ENCODE measurements at regions of chr11 and their contacts with region 1.

Region 1: GRCh38 chr11:86456052-86456939 is 81.6 kb downstream of the CCDC81 start:
- DNase-seq: peak; percentile 92
- ATAC-seq: peak; percentile 93
- H3K4me3 Mint-ChIP-seq: no peak overlapping the region
- H3K27ac Mint-ChIP-seq: no peak overlapping the region
- H3K4me1 Mint-ChIP-seq: peaks cover 18% of the 10 kb centered on the region
- H3K27me3 Mint-ChIP-seq: no peaks in the 10 kb centered on the region
- CTCF ChIP-seq: peak; percentile 94

Region 2: DNA sequence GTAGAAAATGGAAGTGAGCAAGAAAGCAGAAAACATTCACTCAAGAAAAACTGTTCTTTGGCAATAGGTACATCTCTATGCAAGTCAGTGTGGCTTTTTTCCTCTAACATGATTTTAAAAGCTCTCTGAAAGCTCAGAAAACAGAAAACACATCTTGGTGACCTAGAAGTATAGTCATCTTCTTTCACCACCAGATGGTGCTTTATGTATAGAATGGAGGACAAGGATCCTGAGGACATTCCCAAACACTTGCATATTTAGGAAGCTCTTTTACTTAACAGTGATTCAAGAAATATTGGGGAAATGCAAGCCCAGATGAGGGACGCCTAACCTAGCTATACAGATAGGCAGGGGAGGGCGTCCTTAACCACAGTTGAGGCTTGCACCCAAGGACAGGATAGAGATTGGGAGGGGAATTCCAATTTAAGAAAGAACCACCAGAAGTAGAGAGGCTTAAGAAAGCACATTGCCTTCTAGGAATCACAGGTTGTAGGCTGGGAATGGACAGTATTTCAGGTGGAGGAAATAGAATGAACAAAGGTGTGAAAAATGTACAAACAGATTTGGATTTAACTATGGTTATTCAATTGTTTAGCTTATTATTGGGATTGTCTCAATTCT is 95.4 kb before region 1 on chr11:
- CTCF ChIA-PET with region 1: no interaction called
- POLR2A ChIA-PET with region 1: no interaction called
- intact Hi-C with region 1: no loop called
- DNase-seq: no peak
- ATAC-seq: no peak
- H3K4me3 Mint-ChIP-seq: no peak overlapping the region
- H3K27ac Mint-ChIP-seq: no peak overlapping the region
- H3K4me1 Mint-ChIP-seq: no peaks in the 10 kb centered on the region
- H3K27me3 Mint-ChIP-seq: peaks cover 2% of the 10 kb centered on the region
- CTCF ChIP-seq: no peak

Region 3: GRCh38 chr11:86497181-86497701 is 40.9 kb after region 1 on chr11:
- CTCF ChIA-PET with region 1: no interaction called
- POLR2A ChIA-PET with region 1: no interaction called
- intact Hi-C with region 1: no loop called
- DNase-seq: no peak
- ATAC-seq: no peak
- H3K4me3 Mint-ChIP-seq: no peak overlapping the region
- H3K27ac Mint-ChIP-seq: no peak overlapping the region
- H3K4me1 Mint-ChIP-seq: peaks cover 2% of the 10 kb centered on the region
- H3K27me3 Mint-ChIP-seq: peaks cover 3% of the 10 kb centered on the region
- CTCF ChIP-seq: no peak

Region 4: GRCh38 chr11:86515297-86516094 is 59.2 kb after region 1 on chr11:
- CTCF ChIA-PET with region 1: no interaction called
- POLR2A ChIA-PET with region 1: no interaction called
- intact Hi-C with region 1: no loop called
- DNase-seq: no peak
- ATAC-seq: no peak
- H3K4me3 Mint-ChIP-seq: no peak overlapping the region
- H3K27ac Mint-ChIP-seq: no peak overlapping the region
- H3K4me1 Mint-ChIP-seq: no peaks in the 10 kb centered on the region
- H3K27me3 Mint-ChIP-seq: peaks cover 2% of the 10 kb centered on the region
- CTCF ChIP-seq: no peak

Region 5: GRCh38 chr11:86537541-86538222 is 81.4 kb after region 1 on chr11:
- CTCF ChIA-PET with region 1: no interaction called
- POLR2A ChIA-PET with region 1: no interaction called
- intact Hi-C with region 1: no loop called
- DNase-seq: no peak
- ATAC-seq: no peak
- H3K4me3 Mint-ChIP-seq: no peak overlapping the region
- H3K27ac Mint-ChIP-seq: no peak overlapping the region
- H3K4me1 Mint-ChIP-seq: no peaks in the 10 kb centered on the region
- H3K27me3 Mint-ChIP-seq: peaks cover 2% of the 10 kb centered on the region
- CTCF ChIP-seq: no peak

Region 6: DNA sequence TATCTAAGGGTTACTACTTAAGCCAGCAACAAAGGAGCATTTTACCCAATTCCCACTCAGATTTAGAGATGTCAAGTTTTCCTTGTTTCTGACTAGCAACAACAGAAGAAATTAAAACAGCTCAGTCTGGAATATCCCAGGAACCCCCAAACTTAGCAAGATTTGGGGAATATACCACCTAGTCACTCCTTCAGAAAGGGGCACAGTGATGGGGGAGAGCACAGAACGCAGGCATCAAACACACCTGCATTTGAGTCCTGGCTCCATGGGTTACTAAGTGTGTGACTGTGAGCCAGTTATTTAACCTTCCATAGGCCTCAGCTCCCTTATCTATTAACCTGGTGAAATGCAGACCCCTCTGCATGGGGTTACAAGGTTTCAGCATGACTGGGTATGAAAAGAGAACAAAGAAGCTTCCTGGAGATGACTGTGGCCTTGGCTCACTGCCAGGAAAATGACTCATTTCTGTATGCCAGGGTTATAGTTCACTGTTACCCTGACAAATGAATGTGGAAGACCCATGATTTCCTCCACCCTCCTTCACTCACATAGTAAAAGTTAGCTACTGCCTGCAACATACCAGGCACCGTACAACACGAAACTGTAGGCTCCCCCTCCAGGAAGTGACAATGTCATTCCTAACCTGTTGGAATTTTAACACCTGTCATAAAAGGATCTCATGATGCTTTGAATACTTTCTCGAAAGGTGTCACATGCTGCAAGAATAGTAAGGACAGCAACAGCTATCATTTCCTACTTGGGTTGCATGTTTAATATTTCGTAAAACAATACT is 136.6 kb after region 1 on chr11:
- CTCF ChIA-PET with region 1: interaction called, 3 read pairs
- POLR2A ChIA-PET with region 1: no interaction called
- intact Hi-C with region 1: loop called (anchors 5 kb)
- DNase-seq: peak; percentile 97
- ATAC-seq: peak; percentile 97
- H3K4me3 Mint-ChIP-seq: no peak overlapping the region
- H3K27ac Mint-ChIP-seq: peak overlapping the region; percentile 67
- H3K4me1 Mint-ChIP-seq: peaks cover 28% of the 10 kb centered on the region
- H3K27me3 Mint-ChIP-seq: no peaks in the 10 kb centered on the region
- CTCF ChIP-seq: no peak

Region 7: GRCh38 chr11:86671682-86672621 is 215.7 kb after region 1 on chr11 and contains the start of gene ME3:
- CTCF ChIA-PET with region 1: interaction called, 4 read pairs
- POLR2A ChIA-PET with region 1: no interaction called
- intact Hi-C with region 1: loop called (anchors 10 kb)
- DNase-seq: peak; percentile 63
- ATAC-seq: peak; percentile 86
- H3K4me3 Mint-ChIP-seq: peak within 1 kb of the TSS; percentile 71
- H3K27ac Mint-ChIP-seq: peak within 1 kb of the TSS; percentile 47
- H3K4me1 Mint-ChIP-seq: peaks cover 6% of the 10 kb centered on the region
- H3K27me3 Mint-ChIP-seq: peaks cover 35% of the 10 kb centered on the region
- CTCF ChIP-seq: no peak
- total RNA-seq, gene ME3: 5.0 to 6.2 TPM

Region 8: DNA sequence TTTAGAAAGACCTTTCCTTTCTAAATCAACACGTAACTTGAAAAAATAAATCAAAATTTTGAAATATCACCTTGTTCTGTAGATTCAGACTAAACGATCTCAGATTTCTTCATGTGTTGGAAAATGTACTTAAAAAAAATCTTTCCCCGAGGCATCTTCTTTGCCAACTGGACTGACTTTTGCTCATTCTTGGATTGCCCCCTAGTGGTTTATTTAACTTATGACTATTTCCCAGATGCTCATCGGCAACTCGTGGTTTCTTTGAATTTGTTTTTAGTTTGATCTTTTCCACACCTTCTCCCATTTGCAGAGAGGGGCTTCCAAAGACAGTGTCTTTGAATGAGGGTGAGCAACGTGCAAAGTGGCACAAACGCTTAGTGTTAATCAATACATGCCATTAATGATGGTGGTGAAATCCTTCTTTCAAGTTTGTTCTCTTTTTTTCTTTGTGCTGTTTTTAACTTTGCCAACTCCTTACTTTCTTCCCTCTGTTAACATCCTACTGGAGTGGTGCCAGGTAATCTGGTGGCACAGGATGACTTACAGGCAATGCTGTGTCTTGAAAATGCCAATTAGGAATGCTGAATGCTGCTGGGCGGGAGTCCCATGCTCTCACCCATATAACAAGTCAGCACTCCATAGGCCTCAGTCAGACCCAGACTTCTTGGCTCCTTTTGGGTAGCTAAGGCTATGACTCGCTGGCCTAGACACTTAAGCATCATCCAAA is 362.3 kb after region 1 on chr11:
- CTCF ChIA-PET with region 1: interaction called, 9 read pairs
- POLR2A ChIA-PET with region 1: no interaction called
- intact Hi-C with region 1: loop called (anchors 2 kb)
- DNase-seq: no peak
- ATAC-seq: peak; percentile 51
- H3K4me3 Mint-ChIP-seq: no peak overlapping the region
- H3K27ac Mint-ChIP-seq: no peak overlapping the region
- H3K4me1 Mint-ChIP-seq: no peaks in the 10 kb centered on the region
- H3K27me3 Mint-ChIP-seq: peaks cover 24% of the 10 kb centered on the region
- CTCF ChIP-seq: peak; percentile 91